Uterus (tissue), 4 donors: ENCODE measurements at regions of chr12 and their contacts with region 1.

Region 1: DNA sequence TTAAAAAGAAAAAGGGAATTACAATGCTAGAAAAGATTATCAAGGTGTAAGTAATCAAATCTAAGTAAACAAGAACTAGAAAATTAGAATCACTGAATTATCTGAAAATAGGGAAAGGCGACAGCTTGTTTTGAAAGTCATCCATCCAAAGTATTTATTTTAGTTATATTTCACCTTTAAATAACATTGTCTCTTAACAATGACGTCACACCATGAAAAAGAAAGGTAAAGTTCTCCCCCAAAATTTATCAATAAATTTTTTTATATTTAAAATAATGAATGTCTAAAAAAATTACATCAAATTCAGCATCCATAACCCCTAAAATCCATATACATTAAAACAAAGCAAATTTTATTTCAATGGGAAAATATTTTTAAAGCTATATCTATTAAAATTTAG is 223.2 kb downstream of the RERGL start:
- DNase-seq: no peak
- H3K4me3 ChIP-seq: no peak overlapping the region
- H3K27ac ChIP-seq: no peak overlapping the region
- H3K4me1 ChIP-seq: no peaks in the 10 kb centered on the region
- H3K27me3 ChIP-seq: no peaks in the 10 kb centered on the region
- CTCF ChIP-seq: no peak
- POLR2A ChIP-seq: no peak

Region 2: GRCh38 chr12:17489452-17489851 is 377.4 kb before region 1 on chr12:
- intact Hi-C with region 1: no loop called
- DNase-seq: no peak
- H3K4me3 ChIP-seq: no peak overlapping the region
- H3K27ac ChIP-seq: no peak overlapping the region
- H3K4me1 ChIP-seq: no peaks in the 10 kb centered on the region
- H3K27me3 ChIP-seq: no peaks in the 10 kb centered on the region
- CTCF ChIP-seq: no peak
- POLR2A ChIP-seq: no peak

Region 3: GRCh38 chr12:17778242-17778641 is 88.6 kb before region 1 on chr12:
- intact Hi-C with region 1: loop called (anchors 5 kb)
- DNase-seq: no peak
- H3K4me3 ChIP-seq: no peak overlapping the region
- H3K27ac ChIP-seq: no peak overlapping the region
- H3K4me1 ChIP-seq: no peaks in the 10 kb centered on the region
- H3K27me3 ChIP-seq: no peaks in the 10 kb centered on the region
- CTCF ChIP-seq: no peak
- POLR2A ChIP-seq: no peak

Region 4: GRCh38 chr12:18079541-18080246 is 212.9 kb after region 1 on chr12:
- intact Hi-C with region 1: no loop called
- DNase-seq: no peak
- H3K4me3 ChIP-seq: no peak overlapping the region
- H3K27ac ChIP-seq: no peak overlapping the region
- H3K4me1 ChIP-seq: no peaks in the 10 kb centered on the region
- H3K27me3 ChIP-seq: no peaks in the 10 kb centered on the region
- CTCF ChIP-seq: no peak
- POLR2A ChIP-seq: no peak